CD8-positive, alpha-beta memory T cell (primary cell): ENCODE measurements at regions of chr7 and their contacts with region 1.

Region 1: DNA sequence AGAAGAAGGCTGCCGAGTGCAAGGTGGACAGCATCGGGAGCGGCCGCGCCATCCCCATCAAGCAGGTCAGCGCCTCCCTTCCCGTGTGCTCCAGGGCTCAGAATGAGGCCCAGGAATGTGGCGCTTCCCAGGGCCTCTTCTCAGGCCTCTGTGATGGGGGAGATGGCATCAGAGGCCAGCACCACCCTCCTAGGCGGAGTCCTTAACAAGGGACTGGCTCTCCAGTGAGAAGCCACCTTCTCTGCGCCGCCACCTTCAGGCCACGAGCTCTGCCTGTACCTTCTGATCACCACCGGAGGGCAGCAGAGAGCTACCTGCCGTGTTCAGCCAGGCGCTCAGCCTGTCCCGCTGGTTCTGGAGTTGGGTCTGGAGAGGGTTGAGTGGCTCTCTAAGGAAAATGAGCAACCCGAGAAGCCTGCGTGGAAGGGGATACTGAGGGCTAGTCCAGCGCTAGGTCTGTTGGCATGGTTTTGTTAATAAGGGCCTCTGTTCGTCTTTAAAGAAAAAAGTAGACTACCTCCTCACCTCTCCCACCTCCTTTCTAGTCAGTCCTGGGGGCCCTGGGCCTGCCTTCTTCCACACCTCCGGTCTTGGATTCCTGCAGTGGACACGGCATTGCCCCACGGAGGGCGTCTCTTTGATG is 37.7 kb downstream of the AGAP3 start:
- DNase-seq: peak; percentile 72 to 86 (median 76)
- H3K4me3 ChIP-seq: no peak overlapping the region
- H3K4me3 Mint-ChIP-seq: no peak overlapping the region
- H3K27ac ChIP-seq: no peak overlapping the region
- H3K27ac Mint-ChIP-seq: peak overlapping the region in 2 of 8 donors; percentile 1 to 74
- H3K4me1 ChIP-seq: no peaks in the 10 kb centered on the region
- H3K4me1 Mint-ChIP-seq: peaks cover 5 to 7% (median 5%) of the 10 kb centered on the region in 3 donors
- H3K27me3 ChIP-seq: no peaks in the 10 kb centered on the region
- H3K27me3 Mint-ChIP-seq: no peaks in the 10 kb centered on the region

Region 2: DNA sequence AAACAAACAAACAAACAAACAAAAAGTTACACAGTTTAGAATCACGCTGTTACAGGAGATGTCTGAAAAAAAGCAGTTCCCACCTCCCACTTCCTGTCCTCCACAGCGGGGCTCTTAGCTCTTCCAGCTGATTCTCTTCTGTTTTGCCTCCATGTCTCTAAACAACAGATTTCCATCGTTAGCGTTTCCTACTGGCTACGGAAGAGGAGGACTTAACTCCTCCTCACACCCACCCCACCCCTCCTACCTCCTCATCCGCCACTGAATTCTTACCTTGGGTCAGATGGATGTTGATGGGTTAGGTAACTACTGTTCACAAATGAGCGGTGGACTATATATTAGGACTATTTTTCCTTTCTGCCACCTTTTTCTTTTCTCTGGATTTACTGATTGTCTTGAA is 180.9 kb after region 1 on chr7:
- CTCF ChIA-PET with region 1: interaction called, 10 read pairs
- POLR2A ChIA-PET with region 1: no interaction called
- DNase-seq: no peak
- H3K4me3 ChIP-seq: no peak overlapping the region
- H3K4me3 Mint-ChIP-seq: peak overlapping the region in 3 of 7 donors; percentile 2 to 19 (median 11)
- H3K27ac ChIP-seq: no peak overlapping the region
- H3K27ac Mint-ChIP-seq: no peak overlapping the region
- H3K4me1 ChIP-seq: peaks cover 4% of the 10 kb centered on the region
- H3K4me1 Mint-ChIP-seq: peaks cover 6 to 8% (median 7%) of the 10 kb centered on the region in 3 donors
- H3K27me3 ChIP-seq: peaks cover 4% of the 10 kb centered on the region
- H3K27me3 Mint-ChIP-seq: peaks cover 18 to 54% of the 10 kb centered on the region in 2 donors